Dendritic cell treated with granulocyte-macrophage colony-stimulating factor and Interleukin-4, amounts not matched to agents 40 ng/mL and 50 ng/mL, for 4 days (primary cell): ENCODE measurements at regions of chr7 and their contacts with region 1.

Region 1: GRCh38 chr7:7114706-7115295 is 67.5 kb upstream of the C1GALT1 start:
- H3K4me3 Mint-ChIP-seq: no peak overlapping the region
- H3K27ac Mint-ChIP-seq: no peak overlapping the region
- H3K4me1 Mint-ChIP-seq: no peaks in the 10 kb centered on the region
- H3K27me3 Mint-ChIP-seq: peaks cover 1% of the 10 kb centered on the region

Region 2: DNA sequence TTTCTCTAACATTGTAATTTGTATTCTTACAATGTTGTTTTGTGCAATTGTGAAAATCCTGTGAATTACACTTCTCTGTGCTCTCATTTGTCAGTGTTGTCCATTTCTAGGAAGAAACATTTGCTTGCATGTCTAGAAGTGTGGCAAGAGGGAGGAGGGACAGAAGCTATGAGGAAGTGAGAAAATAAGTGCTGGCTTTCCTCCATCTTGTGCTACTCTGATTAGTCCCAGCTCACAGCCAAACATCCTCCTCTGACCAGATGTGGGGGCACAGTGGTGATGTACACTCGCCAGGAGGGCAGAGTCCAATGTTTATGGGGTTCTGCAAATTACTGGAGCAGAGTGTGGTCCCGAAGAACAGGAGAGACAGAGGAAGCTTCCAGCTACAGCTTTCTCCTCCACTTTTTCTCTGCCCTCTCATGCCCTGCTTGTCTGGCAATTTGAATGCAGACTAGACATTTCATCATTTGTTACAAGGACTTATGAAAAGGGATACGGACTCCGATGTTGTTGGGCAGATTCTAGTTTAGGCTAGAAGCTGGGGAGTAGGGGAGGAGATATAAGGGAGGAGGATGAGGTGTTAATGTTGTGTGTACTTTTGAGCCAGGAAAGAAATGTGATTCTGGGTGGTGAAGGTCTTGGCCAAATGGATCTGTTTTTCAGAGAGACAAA is 63.5 kb before region 1 on chr7:
- intact Hi-C with region 1: no loop called
- H3K4me3 Mint-ChIP-seq: no peak overlapping the region
- H3K27ac Mint-ChIP-seq: peak overlapping the region; percentile 76
- H3K4me1 Mint-ChIP-seq: peaks cover 9% of the 10 kb centered on the region
- H3K27me3 Mint-ChIP-seq: no peaks in the 10 kb centered on the region

Region 3: GRCh38 chr7:7103343-7104313 is 11.2 kb before region 1 on chr7:
- intact Hi-C with region 1: no loop called
- H3K4me3 Mint-ChIP-seq: no peak overlapping the region
- H3K27ac Mint-ChIP-seq: peak overlapping the region; percentile 50
- H3K4me1 Mint-ChIP-seq: peaks cover 17% of the 10 kb centered on the region
- H3K27me3 Mint-ChIP-seq: peaks cover 1% of the 10 kb centered on the region

Region 4: GRCh38 chr7:7416031-7416858 is 301.4 kb after region 1 on chr7:
- intact Hi-C with region 1: loop called (anchors 5 kb)
- H3K4me3 Mint-ChIP-seq: no peak overlapping the region
- H3K27ac Mint-ChIP-seq: no peak overlapping the region
- H3K4me1 Mint-ChIP-seq: peaks cover 12% of the 10 kb centered on the region
- H3K27me3 Mint-ChIP-seq: no peaks in the 10 kb centered on the region